ENCODE measurements at regions of chr12 and their contacts with region 1.

Region 1: GRCh38 chr12:100154474-100155247 is 12.0 kb upstream of the BLTP3B start:
- DNase-seq: peak; percentile 69
- ATAC-seq: peak; percentile 61
- H3K4me3 ChIP-seq: no peak overlapping the region
- H3K4me3 Mint-ChIP-seq: no peak overlapping the region
- H3K27ac ChIP-seq: no peak overlapping the region
- H3K27ac Mint-ChIP-seq: no peak overlapping the region
- H3K4me1 ChIP-seq: peaks cover 0 to 3% of the 10 kb centered on the region in 2 donors
- H3K4me1 Mint-ChIP-seq: no peaks in the 10 kb centered on the region
- H3K27me3 ChIP-seq: no peaks in the 10 kb centered on the region
- H3K27me3 Mint-ChIP-seq: no peaks in the 10 kb centered on the region
- CTCF ChIP-seq: peak; percentile 86

Region 2: GRCh38 chr12:100142851-100143559 is 11.7 kb before region 1 on chr12 and contains the start of gene BLTP3B:
- CTCF ChIA-PET with region 1: interaction called, 18 read pairs
- POLR2A ChIA-PET with region 1: no interaction called
- intact Hi-C with region 1: no loop called
- DNase-seq: peak; percentile 91
- ATAC-seq: peak; percentile 95
- H3K4me3 ChIP-seq: peak within 1 kb of the TSS; percentile 67 to 97 (median 93)
- H3K4me3 Mint-ChIP-seq: peak within 1 kb of the TSS; percentile 99
- H3K27ac ChIP-seq: peak within 1 kb of the TSS; percentile 92 to 95
- H3K27ac Mint-ChIP-seq: peak within 1 kb of the TSS; percentile 98
- H3K4me1 ChIP-seq: peaks cover 27 to 30% of the 10 kb centered on the region in 2 donors
- H3K4me1 Mint-ChIP-seq: peaks cover 41% of the 10 kb centered on the region
- H3K27me3 ChIP-seq: no peaks in the 10 kb centered on the region
- H3K27me3 Mint-ChIP-seq: no peaks in the 10 kb centered on the region
- CTCF ChIP-seq: no peak
- total RNA-seq, gene BLTP3B: 27.4 and 30.2 TPM in 2 replicates

Region 3: GRCh38 chr12:100221523-100221922 is 66.9 kb after region 1 on chr12:
- CTCF ChIA-PET with region 1: no interaction called
- POLR2A ChIA-PET with region 1: no interaction called
- intact Hi-C with region 1: no loop called
- DNase-seq: no peak
- ATAC-seq: no peak
- H3K4me3 ChIP-seq: no peak overlapping the region
- H3K4me3 Mint-ChIP-seq: no peak overlapping the region
- H3K27ac ChIP-seq: no peak overlapping the region
- H3K27ac Mint-ChIP-seq: no peak overlapping the region
- H3K4me1 ChIP-seq: no peaks in the 10 kb centered on the region
- H3K4me1 Mint-ChIP-seq: no peaks in the 10 kb centered on the region
- H3K27me3 ChIP-seq: no peaks in the 10 kb centered on the region
- H3K27me3 Mint-ChIP-seq: no peaks in the 10 kb centered on the region
- CTCF ChIP-seq: no peak

Measured in B cell (primary cell).